B cell (primary cell): ENCODE measurements at regions of chr13 and their contacts with region 1.

Region 1: GRCh38 chr13:49792550-49793324 is at the start of gene KPNA3:
- DNase-seq: peak; percentile 97
- ATAC-seq: peak; percentile 87
- H3K4me3 ChIP-seq: peak within 1 kb of the TSS; percentile 79 to 88 (median 80)
- H3K4me3 Mint-ChIP-seq: peak within 1 kb of the TSS; percentile 97
- H3K27ac ChIP-seq: peak within 1 kb of the TSS; percentile 85 to 91
- H3K27ac Mint-ChIP-seq: peak within 1 kb of the TSS; percentile 99
- H3K4me1 ChIP-seq: peaks cover 20 to 21% of the 10 kb centered on the region in 2 donors
- H3K4me1 Mint-ChIP-seq: peaks cover 34% of the 10 kb centered on the region
- H3K27me3 ChIP-seq: no peaks in the 10 kb centered on the region
- H3K27me3 Mint-ChIP-seq: peaks cover 4% of the 10 kb centered on the region
- CTCF ChIP-seq: no peak
- total RNA-seq, gene KPNA3: 19.0 and 19.7 TPM in 2 replicates

Region 2: GRCh38 chr13:48131533-48131932 is 1661.2 kb before region 1 on chr13:
- CTCF ChIA-PET with region 1: no interaction called
- POLR2A ChIA-PET with region 1: no interaction called
- intact Hi-C with region 1: no loop called
- DNase-seq: no peak
- ATAC-seq: no peak
- H3K4me3 ChIP-seq: no peak overlapping the region
- H3K4me3 Mint-ChIP-seq: no peak overlapping the region
- H3K27ac ChIP-seq: no peak overlapping the region
- H3K27ac Mint-ChIP-seq: no peak overlapping the region
- H3K4me1 ChIP-seq: peaks cover 10 to 12% of the 10 kb centered on the region in 2 donors
- H3K4me1 Mint-ChIP-seq: peaks cover 7% of the 10 kb centered on the region
- H3K27me3 ChIP-seq: peaks cover 0 to 5% (median 0%) of the 10 kb centered on the region in 4 experiments
- H3K27me3 Mint-ChIP-seq: peaks cover 13% of the 10 kb centered on the region
- CTCF ChIP-seq: no peak

Region 3: GRCh38 chr13:49247643-49248621 is 544.8 kb before region 1 on chr13 and contains the start of gene CDADC1:
- CTCF ChIA-PET with region 1: no interaction called
- POLR2A ChIA-PET with region 1: no interaction called
- intact Hi-C with region 1: loop called (anchors 1 kb)
- DNase-seq: peak; percentile 92
- ATAC-seq: peak; percentile 95
- H3K4me3 ChIP-seq: peak within 1 kb of the TSS; percentile 86 to 92 (median 89)
- H3K4me3 Mint-ChIP-seq: peak within 1 kb of the TSS; percentile 100
- H3K27ac ChIP-seq: peak within 1 kb of the TSS; percentile 76 to 86
- H3K27ac Mint-ChIP-seq: peak within 1 kb of the TSS; percentile 97
- H3K4me1 ChIP-seq: peaks cover 10 to 11% of the 10 kb centered on the region in 2 donors
- H3K4me1 Mint-ChIP-seq: peaks cover 26% of the 10 kb centered on the region
- H3K27me3 ChIP-seq: no peaks in the 10 kb centered on the region
- H3K27me3 Mint-ChIP-seq: no peaks in the 10 kb centered on the region
- CTCF ChIP-seq: no peak
- total RNA-seq, gene CDADC1: 14.5 and 15.1 TPM in 2 replicates

Region 4: GRCh38 chr13:49627831-49628652 is 164.7 kb before region 1 on chr13 and contains the start of gene ARL11:
- CTCF ChIA-PET with region 1: no interaction called
- POLR2A ChIA-PET with region 1: interaction called, 8 read pairs
- intact Hi-C with region 1: loop called (anchors 5 kb)
- DNase-seq: peak; percentile 88
- ATAC-seq: peak; percentile 99
- H3K4me3 ChIP-seq: peak within 1 kb of the TSS; percentile 79 to 100 (median 90)
- H3K4me3 Mint-ChIP-seq: peak within 1 kb of the TSS; percentile 99
- H3K27ac ChIP-seq: peak within 1 kb of the TSS; percentile 61 to 78
- H3K27ac Mint-ChIP-seq: peak within 1 kb of the TSS; percentile 94
- H3K4me1 ChIP-seq: peaks cover 17 to 21% of the 10 kb centered on the region in 2 donors
- H3K4me1 Mint-ChIP-seq: peaks cover 44% of the 10 kb centered on the region
- H3K27me3 ChIP-seq: no peaks in the 10 kb centered on the region
- H3K27me3 Mint-ChIP-seq: no peaks in the 10 kb centered on the region
- CTCF ChIP-seq: no peak
- total RNA-seq, gene ARL11: 17.9 and 21.4 TPM in 2 replicates

Region 5: DNA sequence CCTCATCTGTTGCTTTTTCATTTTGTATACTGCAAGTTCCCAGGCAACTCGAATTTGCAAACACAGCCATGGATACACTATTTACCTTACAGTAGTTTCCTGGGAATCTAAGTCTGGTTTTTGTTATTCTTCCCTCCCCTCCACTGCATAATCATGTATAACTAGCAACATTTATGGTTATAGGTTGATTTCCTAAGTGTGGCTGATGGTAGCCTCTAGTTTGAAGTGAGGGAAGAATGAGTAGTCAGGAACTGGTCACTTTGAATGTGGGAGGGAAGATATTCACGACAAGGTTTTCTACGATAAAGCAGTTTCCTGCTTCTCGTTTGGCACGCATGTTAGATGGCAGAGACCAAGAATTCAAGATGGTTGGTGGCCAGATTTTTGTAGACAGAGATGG is 222.5 kb after region 1 on chr13 and contains the start of gene KCNRG:
- CTCF ChIA-PET with region 1: no interaction called
- POLR2A ChIA-PET with region 1: interaction called, 10 read pairs
- intact Hi-C with region 1: no loop called
- DNase-seq: no peak
- ATAC-seq: no peak
- H3K4me3 ChIP-seq: no peak within 1 kb of the TSS
- H3K4me3 Mint-ChIP-seq: no peak within 1 kb of the TSS
- H3K27ac ChIP-seq: peak within 1 kb of the TSS in 1 of 2 donors; percentile 65
- H3K27ac Mint-ChIP-seq: peak within 1 kb of the TSS; percentile 42
- H3K4me1 ChIP-seq: no peaks in the 10 kb centered on the region
- H3K4me1 Mint-ChIP-seq: peaks cover 46% of the 10 kb centered on the region
- H3K27me3 ChIP-seq: no peaks in the 10 kb centered on the region
- H3K27me3 Mint-ChIP-seq: no peaks in the 10 kb centered on the region
- CTCF ChIP-seq: no peak
- total RNA-seq, gene KCNRG: 1.6 and 3.4 TPM in 2 replicates